ENCODE measurements at regions of chr11 and their contacts with region 1.

Region 1: GRCh38 chr11:35165423-35166368 is 26.7 kb downstream of the CD44 start:
- DNase-seq: peak; percentile 99
- ATAC-seq: peak; percentile 85
- H3K4me3 ChIP-seq: peak overlapping the region; percentile 53
- H3K27ac ChIP-seq: peak overlapping the region; percentile 72
- H3K4me1 ChIP-seq: peaks cover 54% of the 10 kb centered on the region
- H3K27me3 ChIP-seq: no peaks in the 10 kb centered on the region
- CTCF ChIP-seq: no peak
- EP300 ChIP-seq: peak; percentile 60 to 86; a peak in 3 of 4 replicates
- POLR2A ChIP-seq: peak; percentile 41; the same call in 1 of the 2 replicates
- RAD21 ChIP-seq: no peak

Region 2: DNA sequence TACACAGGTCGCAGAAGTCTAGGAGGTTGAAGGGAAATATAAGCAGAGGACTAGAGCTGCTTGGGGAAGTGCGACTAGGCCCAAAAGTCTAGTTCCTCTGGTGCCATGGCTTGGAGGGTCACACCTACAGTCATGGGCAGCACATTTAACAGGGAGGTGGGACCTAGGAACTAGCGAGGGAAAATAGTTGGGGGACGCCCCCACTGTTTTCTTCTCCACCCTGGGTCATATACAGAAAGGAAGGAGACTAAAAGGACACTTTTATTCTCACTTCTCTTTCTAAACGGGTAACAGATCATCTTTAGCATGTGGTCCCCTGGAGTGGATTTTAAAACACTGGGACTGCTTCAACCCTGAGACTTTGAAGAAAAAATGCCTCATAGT is 266.1 kb before region 1 on chr11:
- CTCF ChIA-PET with region 1: no interaction called
- POLR2A ChIA-PET with region 1: no interaction called
- RAD21 ChIA-PET with region 1: no interaction called
- SMC1A ChIA-PET with region 1: no interaction called
- in situ Hi-C with region 1: no loop called
- intact Hi-C with region 1: no loop called
- DNase-seq: no peak
- ATAC-seq: no peak
- H3K4me3 ChIP-seq: no peak overlapping the region
- H3K27ac ChIP-seq: no peak overlapping the region
- H3K4me1 ChIP-seq: no peaks in the 10 kb centered on the region
- H3K27me3 ChIP-seq: no peaks in the 10 kb centered on the region
- CTCF ChIP-seq: no peak
- EP300 ChIP-seq: no peak
- POLR2A ChIP-seq: no peak
- RAD21 ChIP-seq: no peak

Region 3: DNA sequence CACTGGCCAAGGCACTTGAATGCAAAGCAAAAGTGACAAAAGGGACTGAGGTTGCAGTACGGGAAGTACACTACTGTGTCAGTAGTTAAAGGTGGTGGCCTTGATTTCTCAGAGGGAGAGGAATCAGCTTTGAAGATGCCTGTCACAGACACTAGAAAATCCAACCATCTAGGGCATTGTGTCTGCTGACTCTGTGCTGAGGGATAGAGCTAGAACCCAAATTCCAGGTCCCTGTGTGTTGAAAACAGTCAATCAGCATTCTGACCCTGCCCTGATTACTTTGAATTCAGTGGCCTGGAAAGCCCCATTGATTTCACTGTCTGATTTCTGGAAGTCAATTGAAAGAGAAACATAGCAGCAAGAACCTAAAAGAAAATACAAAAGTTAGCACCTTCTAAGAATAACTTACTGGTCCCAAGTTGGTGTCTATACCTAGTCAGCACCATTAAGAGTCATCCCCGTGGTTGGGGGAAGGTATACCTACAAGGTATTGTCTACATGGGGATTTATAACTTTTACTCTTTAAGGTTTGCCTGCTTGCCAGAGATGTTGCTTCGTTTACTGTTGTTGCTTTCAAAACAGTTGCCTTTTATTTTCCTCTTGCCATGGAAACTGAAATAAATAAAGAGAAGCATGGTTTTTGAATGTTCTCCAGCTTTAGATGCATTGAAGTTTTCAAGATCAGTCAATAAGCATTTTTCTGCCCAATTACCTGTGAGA is 152.0 kb before region 1 on chr11:
- CTCF ChIA-PET with region 1: interaction called, 48 read pairs
- POLR2A ChIA-PET with region 1: interaction called, 3 read pairs
- RAD21 ChIA-PET with region 1: interaction called, 10 read pairs
- SMC1A ChIA-PET with region 1: interaction called, 234 read pairs
- in situ Hi-C with region 1: no loop called
- intact Hi-C with region 1: no loop called
- DNase-seq: no peak
- ATAC-seq: peak; percentile 73
- H3K4me3 ChIP-seq: peak overlapping the region; percentile 11; the same call in 1 of the 2 replicates
- H3K27ac ChIP-seq: peak overlapping the region; percentile 73
- H3K4me1 ChIP-seq: peaks cover 22% of the 10 kb centered on the region
- H3K27me3 ChIP-seq: no peaks in the 10 kb centered on the region
- CTCF ChIP-seq: no peak
- EP300 ChIP-seq: peak; percentile 58 to 63; a peak in 3 of 4 replicates
- POLR2A ChIP-seq: no peak
- RAD21 ChIP-seq: 0 out of 2 replicates have a peak, but pooled peaks have one; percentile 10

Region 4: DNA sequence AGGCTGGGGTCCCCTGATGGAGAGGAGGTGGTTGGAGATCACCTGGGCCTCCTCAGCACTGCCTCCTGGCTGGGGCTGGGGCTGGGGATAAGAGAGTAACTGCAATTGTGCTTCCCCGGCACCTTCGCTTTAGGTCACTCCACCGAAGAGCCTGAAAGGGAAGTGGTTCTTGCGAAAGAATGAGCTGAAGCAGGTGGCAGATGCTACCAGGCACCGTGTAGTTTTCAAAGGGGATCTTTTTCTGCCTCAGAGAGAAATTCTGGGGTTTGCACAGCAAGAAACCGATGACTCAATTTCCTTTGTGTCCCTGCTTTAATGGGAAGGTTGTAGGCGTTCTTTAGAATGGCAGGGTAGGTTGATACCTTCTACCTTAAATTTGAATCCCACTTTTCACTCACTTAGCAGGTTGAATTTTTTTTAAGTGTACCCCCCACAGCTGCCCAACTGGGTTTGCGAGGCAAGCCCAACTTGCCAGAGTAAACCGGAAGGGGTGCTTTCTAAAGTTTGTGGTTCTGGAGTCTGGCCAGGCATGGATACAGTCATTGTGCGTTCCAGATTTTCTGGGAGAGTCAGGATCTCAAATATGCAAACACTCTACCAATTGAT is 21.5 kb before region 1 on chr11:
- CTCF ChIA-PET with region 1: interaction called, 111 read pairs
- POLR2A ChIA-PET with region 1: interaction called, 22 read pairs
- RAD21 ChIA-PET with region 1: interaction called, 38 read pairs
- SMC1A ChIA-PET with region 1: interaction called, 76 read pairs
- in situ Hi-C with region 1: no loop called
- intact Hi-C with region 1: loop called (anchors 1 kb)
- DNase-seq: peak; percentile 85
- ATAC-seq: peak; percentile 67
- H3K4me3 ChIP-seq: peak overlapping the region; percentile 56
- H3K27ac ChIP-seq: peak overlapping the region; percentile 54
- H3K4me1 ChIP-seq: peaks cover 55% of the 10 kb centered on the region
- H3K27me3 ChIP-seq: no peaks in the 10 kb centered on the region
- CTCF ChIP-seq: peak in 2 of 3 experiments; percentile 18 to 22; a peak in 2 of 6 replicates
- EP300 ChIP-seq: peak; percentile 64 to 77; a peak in 3 of 4 replicates
- POLR2A ChIP-seq: 0 out of 2 replicates have a peak, but pooled peaks have one; percentile 52
- RAD21 ChIP-seq: peak; percentile 41; the same call in 1 of the 2 replicates

Region 5: GRCh38 chr11:35182317-35182939 is 16.7 kb after region 1 on chr11:
- CTCF ChIA-PET with region 1: interaction called, 18 read pairs
- POLR2A ChIA-PET with region 1: interaction called, 7 read pairs
- RAD21 ChIA-PET with region 1: interaction called, 56 read pairs
- SMC1A ChIA-PET with region 1: interaction called, 260 read pairs
- in situ Hi-C with region 1: no loop called
- intact Hi-C with region 1: no loop called
- DNase-seq: peak; percentile 52
- ATAC-seq: peak; percentile 93
- H3K4me3 ChIP-seq: no peak overlapping the region
- H3K27ac ChIP-seq: peak overlapping the region; percentile 51
- H3K4me1 ChIP-seq: peaks cover 19% of the 10 kb centered on the region
- H3K27me3 ChIP-seq: no peaks in the 10 kb centered on the region
- CTCF ChIP-seq: no peak
- EP300 ChIP-seq: no peak
- POLR2A ChIP-seq: no peak
- RAD21 ChIP-seq: no peak

Region 6: DNA sequence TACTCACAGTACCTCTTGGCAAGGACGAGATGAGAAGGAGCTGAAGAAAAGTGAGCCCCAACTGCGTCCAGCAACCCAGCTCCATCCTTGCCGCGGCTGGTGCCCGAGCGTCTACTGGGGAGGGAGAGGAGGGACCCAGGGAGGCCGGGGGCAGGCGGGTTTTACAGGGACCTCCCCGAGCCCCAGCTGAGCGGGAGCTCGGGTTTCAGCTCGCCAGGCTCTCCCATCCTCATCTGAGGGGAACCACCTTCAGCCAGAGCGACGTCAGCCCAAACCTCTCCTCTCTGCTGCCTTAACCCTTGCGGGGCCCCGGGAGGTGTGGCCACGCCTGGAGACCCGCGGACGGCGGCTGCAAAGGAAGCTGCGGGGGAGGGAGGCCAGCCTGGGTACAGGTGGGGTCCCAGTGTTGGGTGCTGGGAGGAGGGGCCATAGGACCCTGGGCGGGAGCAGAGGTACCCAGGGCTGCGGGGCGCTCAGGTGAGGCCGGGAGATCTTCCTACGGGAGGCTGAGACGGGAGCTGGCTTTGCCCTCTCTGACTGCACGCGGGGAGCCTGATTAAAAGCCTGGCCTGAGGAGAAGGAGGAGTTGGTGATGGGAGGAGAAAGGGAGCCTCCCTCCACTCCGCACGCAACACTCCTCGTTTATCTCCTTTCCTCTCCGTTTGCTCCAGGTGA is 359.9 kb after region 1 on chr11 and contains the start of gene PAMR1:
- CTCF ChIA-PET with region 1: no interaction called
- POLR2A ChIA-PET with region 1: no interaction called
- RAD21 ChIA-PET with region 1: no interaction called
- SMC1A ChIA-PET with region 1: no interaction called
- in situ Hi-C with region 1: no loop called
- intact Hi-C with region 1: no loop called
- DNase-seq: no peak
- ATAC-seq: peak; percentile 30; the same call in 2 of the 3 replicates
- H3K4me3 ChIP-seq: no peak within 1 kb of the TSS
- H3K27ac ChIP-seq: no peak within 1 kb of the TSS
- H3K4me1 ChIP-seq: no peaks in the 10 kb centered on the region
- H3K27me3 ChIP-seq: peaks cover 4 to 23% of the 10 kb centered on the region in 2 experiments
- CTCF ChIP-seq: no peak
- EP300 ChIP-seq: no peak
- POLR2A ChIP-seq: no peak
- RAD21 ChIP-seq: no peak
- polyA plus RNA-seq, gene PAMR1: 0.04 TPM in 1 of 2 experiments, not detected in the other

Region 7: GRCh38 chr11:35629914-35630313 is 464.2 kb after region 1 on chr11:
- CTCF ChIA-PET with region 1: no interaction called
- POLR2A ChIA-PET with region 1: no interaction called
- RAD21 ChIA-PET with region 1: no interaction called
- SMC1A ChIA-PET with region 1: no interaction called
- in situ Hi-C with region 1: no loop called
- intact Hi-C with region 1: no loop called
- DNase-seq: no peak
- ATAC-seq: no peak
- H3K4me3 ChIP-seq: no peak overlapping the region
- H3K27ac ChIP-seq: no peak overlapping the region
- H3K4me1 ChIP-seq: no peaks in the 10 kb centered on the region
- H3K27me3 ChIP-seq: peaks cover 0 to 8% of the 10 kb centered on the region in 2 experiments; a peak in 2 of 4 replicates
- CTCF ChIP-seq: no peak
- EP300 ChIP-seq: no peak
- POLR2A ChIP-seq: no peak
- RAD21 ChIP-seq: no peak

Measured in GM12878 (cell line).